ENCODE measurements at regions of chr14 and their contacts with region 1.

Region 1: DNA sequence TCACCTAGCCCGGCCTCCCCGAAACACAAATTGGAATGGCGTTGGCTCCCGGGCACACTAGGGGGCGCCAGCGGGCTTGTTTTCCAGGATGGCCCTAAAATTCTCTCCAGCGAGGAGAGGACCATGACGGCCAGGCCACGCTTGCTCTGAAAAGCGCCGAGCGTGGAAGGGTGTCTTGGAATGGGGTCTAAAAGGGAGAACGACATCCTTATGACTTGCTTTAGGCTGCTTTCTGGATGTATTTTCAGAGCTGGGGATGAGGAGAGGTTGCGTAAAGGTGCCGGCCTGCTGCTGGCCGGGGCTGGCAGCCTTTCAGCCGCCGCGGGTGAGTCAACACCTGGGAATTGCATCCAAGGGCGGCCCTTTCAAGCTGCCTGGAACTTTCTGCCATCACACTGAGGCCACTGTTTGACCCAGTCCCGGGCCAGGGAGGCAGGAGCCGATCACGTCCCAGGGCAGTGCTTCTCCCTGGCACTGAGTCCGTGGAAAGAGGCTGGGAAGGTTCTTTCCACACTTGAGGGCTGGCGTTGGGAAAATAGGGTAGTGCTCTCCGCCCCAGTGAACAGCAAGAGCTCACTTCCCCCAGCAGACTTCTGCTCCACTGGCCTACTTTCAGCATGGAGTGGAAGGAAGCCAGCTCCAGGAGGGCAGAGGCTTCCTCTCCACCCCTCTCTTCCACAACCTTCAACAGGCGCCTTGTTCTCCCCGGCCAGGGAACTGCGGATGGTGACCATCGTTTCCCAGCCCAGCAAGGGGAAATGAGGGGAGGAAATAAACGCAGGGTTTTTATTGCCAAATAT is 216.2 kb downstream of the TTC8 start:
- DNase-seq: peak; percentile 91
- ATAC-seq: peak; percentile 83
- H3K4me3 Mint-ChIP-seq: peak overlapping the region; percentile 59
- H3K27ac Mint-ChIP-seq: peak overlapping the region; percentile 81
- H3K4me1 Mint-ChIP-seq: peaks cover 11% of the 10 kb centered on the region
- H3K27me3 Mint-ChIP-seq: peaks cover 20% of the 10 kb centered on the region

Region 2: DNA sequence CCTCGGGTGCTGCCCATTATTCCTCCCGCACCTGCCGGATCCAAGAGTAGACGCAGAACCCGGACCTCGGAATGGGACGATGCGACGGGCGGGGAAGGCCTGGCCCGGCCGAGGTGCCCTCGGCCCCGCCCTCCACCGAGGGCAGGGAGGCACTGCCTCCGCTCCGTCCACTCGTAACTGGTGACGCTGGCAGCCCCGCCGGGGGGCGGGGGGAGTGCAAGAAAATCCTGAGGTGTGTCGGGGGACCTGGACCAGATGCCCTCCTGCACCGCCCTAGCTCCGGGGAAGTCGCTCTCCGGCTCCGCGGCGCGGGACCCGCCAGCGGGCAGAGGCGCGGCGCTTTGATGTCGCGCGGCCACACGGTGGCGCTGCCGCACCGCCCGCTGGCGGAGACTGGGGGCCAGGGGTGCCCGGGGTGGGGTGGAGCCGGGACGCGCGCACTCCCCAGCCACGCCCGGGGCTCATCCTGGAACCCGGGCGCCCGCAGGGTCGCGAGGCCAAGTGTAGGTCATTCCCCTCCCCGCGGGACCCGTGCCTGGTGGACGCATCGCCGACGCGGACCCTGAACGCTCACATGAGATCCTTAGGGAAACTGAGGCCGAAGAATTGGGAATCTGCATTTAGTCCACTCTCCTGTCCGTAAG is 13.4 kb before region 1 on chr14:
- CTCF ChIA-PET with region 1: interaction called, 12 read pairs
- POLR2A ChIA-PET with region 1: no interaction called
- intact Hi-C with region 1: no loop called
- DNase-seq: peak; percentile 76
- ATAC-seq: peak; percentile 96
- H3K4me3 Mint-ChIP-seq: peak overlapping the region; percentile 60
- H3K27ac Mint-ChIP-seq: no peak overlapping the region
- H3K4me1 Mint-ChIP-seq: peaks cover 2% of the 10 kb centered on the region
- H3K27me3 Mint-ChIP-seq: peaks cover 59% of the 10 kb centered on the region

Region 3: DNA sequence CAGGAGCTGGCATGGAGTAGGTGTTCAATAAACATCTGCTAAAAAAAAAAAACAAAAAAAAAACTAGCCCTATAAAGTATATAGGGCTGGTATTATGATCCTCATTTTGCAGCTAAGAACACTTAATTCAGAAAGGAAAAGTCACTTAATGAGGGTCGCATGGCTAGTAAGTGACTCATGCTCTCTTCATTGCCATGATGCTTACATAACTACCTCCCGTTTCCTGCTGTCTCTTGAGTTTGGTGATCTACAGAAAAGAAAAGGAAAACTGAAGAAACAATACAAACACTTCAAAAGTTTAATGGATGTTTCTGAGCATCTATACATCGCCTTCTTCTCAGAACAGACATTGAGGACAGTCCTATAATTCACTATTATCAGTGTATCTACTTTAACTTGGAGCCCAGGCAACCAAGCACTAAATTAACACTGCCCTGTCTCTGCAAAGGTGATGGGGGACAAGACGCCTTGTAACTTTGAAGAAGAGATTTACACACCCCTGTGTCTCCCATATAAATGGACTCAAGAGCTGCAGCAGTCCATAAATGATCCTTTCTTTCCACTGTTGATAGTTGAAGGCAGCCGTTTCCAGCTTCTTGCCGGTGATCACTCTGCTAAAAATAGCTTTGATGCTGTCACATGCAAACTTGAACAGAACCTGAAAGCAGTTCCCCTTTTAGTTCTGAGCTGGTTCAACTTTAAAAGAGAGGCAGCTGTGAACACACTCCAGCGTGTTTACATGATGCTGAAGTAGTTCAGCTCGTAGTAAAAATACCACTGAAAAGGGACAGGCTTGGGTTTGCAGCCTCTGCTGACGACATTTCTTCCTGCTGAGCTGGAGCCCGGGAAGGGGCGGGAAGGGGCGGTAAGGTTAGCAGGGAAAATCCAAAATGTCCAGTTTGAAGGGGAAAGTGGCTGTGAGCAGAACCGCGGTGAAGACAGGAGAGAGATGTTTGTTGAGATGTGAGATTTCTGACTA is 263.1 kb after region 1 on chr14:
- CTCF ChIA-PET with region 1: interaction called, 3 read pairs
- POLR2A ChIA-PET with region 1: no interaction called
- intact Hi-C with region 1: loop called in 1 of 2 experiments (anchors 10 kb)
- DNase-seq: peak; percentile 29
- ATAC-seq: peak; percentile 61
- H3K4me3 Mint-ChIP-seq: peak overlapping the region; percentile 62
- H3K27ac Mint-ChIP-seq: peak overlapping the region; percentile 91
- H3K4me1 Mint-ChIP-seq: peaks cover 62% of the 10 kb centered on the region
- H3K27me3 Mint-ChIP-seq: no peaks in the 10 kb centered on the region

Region 4: GRCh38 chr14:89767861-89768268 is 727.2 kb after region 1 on chr14:
- CTCF ChIA-PET with region 1: no interaction called
- POLR2A ChIA-PET with region 1: no interaction called
- intact Hi-C with region 1: loop called (anchors 1 to 2 kb)
- DNase-seq: peak; percentile 78
- ATAC-seq: peak; percentile 95
- H3K4me3 Mint-ChIP-seq: peak overlapping the region; percentile 13
- H3K27ac Mint-ChIP-seq: peak overlapping the region; percentile 82
- H3K4me1 Mint-ChIP-seq: peaks cover 25% of the 10 kb centered on the region
- H3K27me3 Mint-ChIP-seq: peaks cover 2% of the 10 kb centered on the region

Region 5: DNA sequence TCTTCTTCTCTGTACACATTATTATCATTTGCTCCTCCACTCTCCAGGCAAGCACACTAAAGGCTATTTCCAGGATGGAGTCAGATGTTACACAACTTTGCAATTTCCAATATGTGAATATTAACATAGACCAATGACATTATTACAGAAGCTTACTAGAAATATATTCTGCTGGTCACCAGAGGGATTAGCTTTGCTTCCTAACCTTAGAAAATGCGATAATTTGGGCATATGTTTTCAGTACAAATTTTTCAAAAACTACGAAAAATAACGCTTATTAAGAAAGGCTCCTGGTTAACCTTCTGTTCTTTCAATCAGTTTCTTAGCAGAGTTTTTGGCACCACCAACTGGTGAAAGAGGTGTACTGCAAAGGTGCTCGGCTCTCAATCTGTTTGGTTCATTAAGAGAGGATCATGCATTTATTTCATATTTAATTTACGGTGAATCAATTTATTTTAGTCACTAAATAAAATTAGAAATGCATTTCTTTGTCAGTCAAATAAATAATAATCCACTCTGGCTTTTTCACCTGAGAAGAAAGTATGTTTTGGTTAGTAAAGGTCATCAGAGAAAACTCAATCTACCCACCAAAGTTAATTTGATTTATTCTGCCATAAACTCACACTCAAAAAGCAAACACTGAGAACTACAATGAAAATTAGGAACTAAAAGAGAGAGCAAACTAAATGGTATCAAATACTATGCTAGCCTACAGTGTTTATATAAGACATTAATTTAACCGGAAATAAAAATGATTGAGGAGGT is 874.6 kb after region 1 on chr14:
- CTCF ChIA-PET with region 1: interaction called, 9 read pairs
- POLR2A ChIA-PET with region 1: no interaction called
- intact Hi-C with region 1: loop called (anchors 1 kb)
- DNase-seq: peak; percentile 73
- ATAC-seq: no peak
- H3K4me3 Mint-ChIP-seq: no peak overlapping the region
- H3K27ac Mint-ChIP-seq: no peak overlapping the region
- H3K4me1 Mint-ChIP-seq: peaks cover 3% of the 10 kb centered on the region
- H3K27me3 Mint-ChIP-seq: peaks cover 3% of the 10 kb centered on the region

Measured in activated CD4-positive, alpha-beta T cell treated with anti-CD3 and anti-CD28 coated beads for 36 hours (primary cell).